ENCODE measurements at regions of chr15 and their contacts with region 1.

Region 1: DNA sequence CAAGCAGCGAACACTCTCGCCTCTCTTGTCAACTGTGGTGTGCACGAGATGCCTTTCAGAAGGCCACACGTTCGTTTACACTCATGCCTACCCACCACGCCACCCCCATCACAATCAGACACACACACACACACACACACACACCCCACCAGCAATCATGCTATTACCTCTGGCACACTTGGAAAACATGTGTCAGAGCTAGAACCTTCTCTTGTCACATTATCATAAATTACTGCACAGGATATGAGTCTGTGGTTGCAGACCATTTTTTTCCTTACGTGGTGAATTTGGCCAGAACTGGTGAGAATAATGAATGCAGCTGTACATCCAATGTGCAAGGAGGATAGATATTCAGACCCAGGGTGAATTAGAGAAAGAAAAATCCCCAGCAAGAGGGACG is 52.4 kb downstream of the TRIM69 start:
- DNase-seq: no peak
- ATAC-seq: no peak
- H3K4me3 ChIP-seq: no peak overlapping the region
- H3K27ac ChIP-seq: no peak overlapping the region
- H3K4me1 ChIP-seq: peaks cover 0 to 9% (median 4%) of the 10 kb centered on the region in 12 donors
- H3K27me3 ChIP-seq: no peaks in the 10 kb centered on the region
- CTCF ChIP-seq: no peak
- POLR2A ChIP-seq: no peak

Region 2: GRCh38 chr15:44275150-44275830 is 513.5 kb before region 1 on chr15:
- intact Hi-C with region 1: no loop called
- DNase-seq: no peak
- ATAC-seq: no peak
- H3K4me3 ChIP-seq: no peak overlapping the region
- H3K27ac ChIP-seq: no peak overlapping the region
- H3K4me1 ChIP-seq: no peaks in the 10 kb centered on the region
- H3K27me3 ChIP-seq: peaks cover 0 to 14% (median 0%) of the 10 kb centered on the region in 9 donors
- CTCF ChIP-seq: no peak
- POLR2A ChIP-seq: no peak

Region 3: DNA sequence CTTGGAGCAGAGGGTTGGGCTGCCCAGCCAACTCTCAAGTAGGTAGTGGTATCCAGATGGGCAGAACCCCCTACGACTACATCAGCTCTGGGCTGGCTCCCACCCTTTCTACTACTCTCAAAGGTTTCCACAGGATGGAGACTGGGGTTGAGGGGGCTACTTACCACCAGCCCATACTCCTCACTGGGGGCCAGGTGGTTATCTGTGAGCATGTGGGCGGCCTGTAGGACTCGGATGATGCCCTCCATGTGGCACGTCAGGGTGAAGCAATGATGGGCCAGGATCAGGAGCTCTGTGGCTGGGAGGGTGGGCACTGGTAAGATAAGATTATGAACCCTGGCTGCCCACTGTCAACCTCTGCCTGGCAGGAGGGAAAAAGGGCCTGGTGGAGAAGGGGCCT is 218.4 kb before region 1 on chr15:
- intact Hi-C with region 1: loop called in 1 of 10 experiments (anchors 5 kb)
- DNase-seq: no peak
- ATAC-seq: peak in 2 of 4 donors; percentile 7 to 30
- H3K4me3 ChIP-seq: no peak overlapping the region
- H3K27ac ChIP-seq: no peak overlapping the region
- H3K4me1 ChIP-seq: peaks cover 0 to 9% (median 0%) of the 10 kb centered on the region in 12 donors
- H3K27me3 ChIP-seq: no peaks in the 10 kb centered on the region
- CTCF ChIP-seq: no peak
- POLR2A ChIP-seq: no peak

Region 4: DNA sequence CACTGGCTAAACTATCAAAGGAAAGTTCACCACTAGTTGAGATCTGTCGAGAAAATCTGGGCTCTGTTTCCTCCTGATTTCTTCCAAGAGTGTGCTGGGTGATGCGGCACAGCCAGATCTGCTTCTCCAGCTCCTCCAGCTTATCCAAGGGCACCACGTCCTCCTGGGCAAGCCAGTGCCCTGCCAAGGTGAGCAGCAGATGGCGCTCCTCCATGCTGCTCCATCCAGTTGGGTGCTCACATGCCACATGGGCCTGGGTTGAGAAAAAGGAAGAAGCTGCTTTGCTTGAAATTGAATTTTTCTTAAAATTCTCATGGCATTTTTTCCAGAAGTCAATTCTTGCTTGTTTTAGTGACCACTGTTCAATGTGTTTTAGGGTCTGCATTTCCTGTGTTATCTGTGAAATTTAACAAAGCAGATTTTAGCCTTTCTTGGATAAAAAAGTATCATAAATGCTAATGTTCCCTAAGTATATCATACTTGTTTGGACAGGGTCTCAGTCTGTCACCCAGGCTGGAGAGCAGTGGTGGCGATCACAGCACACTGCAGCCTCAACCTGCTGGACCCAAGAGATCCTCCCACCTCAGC is 204.5 kb before region 1 on chr15:
- intact Hi-C with region 1: loop called in 2 of 10 experiments (anchors 5 kb)
- DNase-seq: peak in 3 of 5 donors; percentile 20 to 52 (median 46)
- ATAC-seq: peak in 3 of 4 donors; percentile 66 to 78 (median 69)
- H3K4me3 ChIP-seq: no peak overlapping the region
- H3K27ac ChIP-seq: no peak overlapping the region
- H3K4me1 ChIP-seq: no peaks in the 10 kb centered on the region
- H3K27me3 ChIP-seq: no peaks in the 10 kb centered on the region
- CTCF ChIP-seq: peak in 7 of 12 donors; percentile 27 to 55 (median 40)
- POLR2A ChIP-seq: no peak

Region 5: GRCh38 chr15:45027220-45027619 is 238.5 kb after region 1 on chr15:
- intact Hi-C with region 1: no loop called
- DNase-seq: no peak
- ATAC-seq: no peak
- H3K4me3 ChIP-seq: no peak overlapping the region
- H3K27ac ChIP-seq: no peak overlapping the region
- H3K4me1 ChIP-seq: peaks cover 0 to 22% (median 12%) of the 10 kb centered on the region in 12 donors
- H3K27me3 ChIP-seq: no peaks in the 10 kb centered on the region
- CTCF ChIP-seq: no peak
- POLR2A ChIP-seq: no peak

Region 6: DNA sequence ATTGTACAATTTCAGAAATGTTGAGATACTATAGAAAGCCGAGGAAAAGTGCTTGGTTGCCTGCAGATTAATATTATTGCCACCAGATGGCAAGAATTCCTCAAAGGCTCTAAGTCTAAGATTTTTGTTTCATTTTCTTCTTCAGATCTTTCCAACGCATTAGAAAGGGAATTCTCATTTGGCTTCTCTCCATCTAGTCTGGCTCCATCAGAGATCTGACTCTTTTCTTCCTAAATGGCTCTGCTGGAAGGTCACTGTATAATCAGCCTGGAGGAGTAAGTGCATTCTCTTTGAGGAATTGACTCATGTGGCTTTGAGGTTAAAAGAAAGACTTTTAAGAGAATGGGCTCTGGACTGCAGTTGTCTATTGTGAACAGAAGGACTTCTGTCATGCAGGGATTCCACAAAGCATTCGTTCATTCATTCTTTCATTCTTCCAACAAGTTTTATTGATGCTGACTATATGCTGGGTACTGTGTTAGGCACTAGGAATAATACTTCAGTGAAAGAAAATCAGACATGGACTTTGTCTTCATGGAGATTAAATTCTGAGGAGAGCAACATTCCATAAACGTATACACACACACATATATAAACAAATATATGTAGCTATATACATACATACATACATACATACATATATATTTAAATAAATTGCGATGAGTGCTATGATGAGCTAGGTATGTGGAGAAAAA is 518.6 kb after region 1 on chr15:
- intact Hi-C with region 1: no loop called
- DNase-seq: no peak
- ATAC-seq: peak in 2 of 4 donors; percentile 54 to 68
- H3K4me3 ChIP-seq: peak overlapping the region in 7 of 12 donors; percentile 27 to 45 (median 33)
- H3K27ac ChIP-seq: peak overlapping the region in 2 of 12 donors; percentile 28 to 37
- H3K4me1 ChIP-seq: peaks cover 0 to 12% (median 3%) of the 10 kb centered on the region in 12 donors
- H3K27me3 ChIP-seq: peaks cover 0 to 4% (median 0%) of the 10 kb centered on the region in 9 donors
- CTCF ChIP-seq: peak; percentile 38 to 78 (median 60)
- POLR2A ChIP-seq: no peak

Measured in heart left ventricle (tissue), 16 donors.